ENCODE measurements at regions of chr6 and their contacts with region 1.

Region 1: GRCh38 chr6:33700391-33701050 is 11.0 kb downstream of the UQCC2 start:
- DNase-seq: peak; percentile 49 to 69
- H3K4me3 ChIP-seq: no peak overlapping the region
- H3K27ac ChIP-seq: no peak overlapping the region
- H3K4me1 ChIP-seq: no peaks in the 10 kb centered on the region
- H3K27me3 ChIP-seq: no peaks in the 10 kb centered on the region
- CTCF ChIP-seq: peak; percentile 83

Region 2: DNA sequence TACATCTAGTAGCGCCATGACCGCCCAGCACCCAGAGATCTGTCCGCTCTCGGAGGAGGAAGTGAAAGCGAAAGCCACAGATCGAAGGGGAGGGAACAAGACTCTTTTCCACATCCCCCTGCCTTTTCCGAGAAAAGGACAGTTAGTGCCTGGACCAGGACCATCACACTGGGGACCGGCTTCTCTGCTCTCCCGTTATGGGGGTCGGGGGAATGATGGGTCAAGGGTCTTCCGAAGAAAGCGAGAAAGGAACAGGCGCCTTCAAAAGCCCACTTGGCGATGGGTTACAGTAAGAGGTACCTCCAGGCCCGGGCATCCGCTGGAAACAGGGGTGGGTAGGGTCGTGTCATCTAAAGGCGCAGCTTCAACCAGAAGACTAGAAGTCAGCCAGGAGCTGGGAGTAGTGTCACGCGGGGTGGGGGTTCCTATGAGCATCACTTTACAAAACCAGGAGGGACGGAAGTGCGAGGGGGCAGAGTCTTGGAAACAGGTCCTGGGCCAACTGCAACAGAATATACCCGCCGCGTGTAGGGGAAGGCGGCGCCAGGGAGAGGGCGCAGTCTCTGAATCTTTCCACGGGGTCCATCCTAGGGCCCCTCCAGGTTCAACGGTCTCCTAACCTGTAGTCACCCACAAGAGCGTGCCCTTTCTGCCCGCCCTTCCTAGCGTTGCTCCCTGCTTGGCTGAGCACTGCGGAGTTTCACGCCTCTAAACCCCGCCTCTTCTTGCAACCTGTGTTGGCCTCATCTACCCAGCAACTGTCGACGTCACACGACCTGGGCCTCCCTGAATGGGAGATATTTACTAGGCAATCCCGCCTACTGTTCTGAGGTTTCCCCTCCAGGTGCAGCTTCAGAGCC is 856.3 kb before region 1 on chr6 and contains the start of gene PSMB8:
- CTCF ChIA-PET with region 1: no interaction called
- POLR2A ChIA-PET with region 1: no interaction called
- intact Hi-C with region 1: loop called (anchors 10 kb)
- DNase-seq: peak; percentile 94
- H3K4me3 ChIP-seq: peak within 1 kb of the TSS; percentile 91
- H3K27ac ChIP-seq: no peak within 1 kb of the TSS
- H3K4me1 ChIP-seq: peaks cover 6% of the 10 kb centered on the region; the same call in 1 of the 2 replicates
- H3K27me3 ChIP-seq: no peaks in the 10 kb centered on the region
- CTCF ChIP-seq: no peak
- total RNA-seq, gene PSMB8: 70.8 and 101 TPM in 2 replicates

Region 3: DNA sequence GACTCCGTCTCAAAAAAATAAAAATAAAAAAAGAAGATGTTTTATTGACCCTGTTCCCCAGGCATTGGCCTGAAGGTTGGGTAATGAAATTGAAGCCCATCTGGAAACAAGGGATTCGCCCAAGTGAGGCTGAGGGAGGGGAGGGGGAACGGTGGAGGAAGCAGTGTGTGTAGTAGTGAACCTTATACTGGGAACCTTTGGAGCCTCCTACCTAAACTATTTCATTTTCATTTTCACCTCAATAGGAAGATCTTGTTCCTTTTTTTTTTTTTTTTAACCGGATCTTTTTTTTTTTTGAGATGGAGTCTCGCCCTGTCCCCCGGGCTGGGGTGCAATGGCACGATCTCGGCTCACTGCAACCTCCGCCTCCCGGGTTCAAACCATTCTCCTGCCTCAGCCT is 369.8 kb before region 1 on chr6:
- CTCF ChIA-PET with region 1: interaction called, 3 read pairs
- POLR2A ChIA-PET with region 1: interaction called, 18 read pairs
- intact Hi-C with region 1: no loop called
- DNase-seq: no peak
- H3K4me3 ChIP-seq: no peak overlapping the region
- H3K27ac ChIP-seq: no peak overlapping the region
- H3K4me1 ChIP-seq: no peaks in the 10 kb centered on the region
- H3K27me3 ChIP-seq: no peaks in the 10 kb centered on the region
- CTCF ChIP-seq: no peak

Region 4: GRCh38 chr6:33467091-33467490 is 233.4 kb before region 1 on chr6:
- CTCF ChIA-PET with region 1: no interaction called
- POLR2A ChIA-PET with region 1: interaction called, 18 read pairs
- intact Hi-C with region 1: no loop called
- DNase-seq: no peak
- H3K4me3 ChIP-seq: no peak overlapping the region
- H3K27ac ChIP-seq: no peak overlapping the region
- H3K4me1 ChIP-seq: no peaks in the 10 kb centered on the region
- H3K27me3 ChIP-seq: no peaks in the 10 kb centered on the region
- CTCF ChIP-seq: no peak

Region 5: DNA sequence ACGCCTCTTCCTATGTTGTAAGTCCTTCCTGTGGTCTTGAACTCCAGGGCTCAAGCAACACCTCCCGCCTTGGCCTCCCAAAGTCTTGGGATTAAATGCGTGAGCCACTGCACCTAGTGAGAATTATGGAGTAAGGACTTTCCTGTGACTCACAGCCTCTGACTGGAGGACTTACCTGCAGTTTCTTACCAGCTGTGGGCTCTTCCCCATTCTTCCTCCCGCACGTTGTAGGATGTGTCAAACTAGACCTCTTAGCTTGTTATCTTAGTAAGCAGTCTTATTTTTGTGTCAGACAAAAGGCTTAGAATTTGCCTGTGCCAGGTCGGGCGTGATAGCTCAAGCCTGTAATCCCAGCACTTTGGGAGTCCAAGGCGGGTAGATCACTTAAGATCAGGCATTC is 151.3 kb before region 1 on chr6:
- CTCF ChIA-PET with region 1: no interaction called
- POLR2A ChIA-PET with region 1: interaction called, 10 read pairs
- intact Hi-C with region 1: no loop called
- DNase-seq: no peak
- H3K4me3 ChIP-seq: no peak overlapping the region
- H3K27ac ChIP-seq: no peak overlapping the region
- H3K4me1 ChIP-seq: no peaks in the 10 kb centered on the region; the same call in 1 of the 2 replicates
- H3K27me3 ChIP-seq: no peaks in the 10 kb centered on the region
- CTCF ChIP-seq: no peak

Measured in PC-9 (cell line).